ENCODE measurements at regions of chr11 and their contacts with region 1.

Region 1: DNA sequence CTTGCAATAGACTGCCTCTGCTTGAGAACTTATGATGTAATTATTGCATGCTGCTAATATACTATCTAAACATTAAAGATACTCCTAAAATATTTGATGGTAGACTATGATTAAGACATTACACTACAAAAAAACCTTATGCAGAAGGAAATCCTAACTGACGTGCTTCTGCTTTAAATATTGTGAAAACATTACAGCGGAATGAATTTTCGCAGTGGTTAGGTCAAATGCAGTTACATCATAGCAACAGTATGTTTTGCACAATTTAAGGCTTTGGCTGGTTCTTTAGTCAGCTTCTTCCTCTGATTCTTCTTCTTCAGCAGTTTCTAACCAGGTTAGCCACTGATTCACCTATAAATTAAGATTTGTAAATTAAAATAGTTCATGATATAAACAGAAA is 11.2 kb downstream of the EIF4G2 start:
- DNase-seq: no peak
- ATAC-seq: no peak
- H3K4me3 ChIP-seq: no peak overlapping the region
- H3K4me1 ChIP-seq: peaks cover 8% of the 10 kb centered on the region
- CTCF ChIP-seq: no peak

Region 2: DNA sequence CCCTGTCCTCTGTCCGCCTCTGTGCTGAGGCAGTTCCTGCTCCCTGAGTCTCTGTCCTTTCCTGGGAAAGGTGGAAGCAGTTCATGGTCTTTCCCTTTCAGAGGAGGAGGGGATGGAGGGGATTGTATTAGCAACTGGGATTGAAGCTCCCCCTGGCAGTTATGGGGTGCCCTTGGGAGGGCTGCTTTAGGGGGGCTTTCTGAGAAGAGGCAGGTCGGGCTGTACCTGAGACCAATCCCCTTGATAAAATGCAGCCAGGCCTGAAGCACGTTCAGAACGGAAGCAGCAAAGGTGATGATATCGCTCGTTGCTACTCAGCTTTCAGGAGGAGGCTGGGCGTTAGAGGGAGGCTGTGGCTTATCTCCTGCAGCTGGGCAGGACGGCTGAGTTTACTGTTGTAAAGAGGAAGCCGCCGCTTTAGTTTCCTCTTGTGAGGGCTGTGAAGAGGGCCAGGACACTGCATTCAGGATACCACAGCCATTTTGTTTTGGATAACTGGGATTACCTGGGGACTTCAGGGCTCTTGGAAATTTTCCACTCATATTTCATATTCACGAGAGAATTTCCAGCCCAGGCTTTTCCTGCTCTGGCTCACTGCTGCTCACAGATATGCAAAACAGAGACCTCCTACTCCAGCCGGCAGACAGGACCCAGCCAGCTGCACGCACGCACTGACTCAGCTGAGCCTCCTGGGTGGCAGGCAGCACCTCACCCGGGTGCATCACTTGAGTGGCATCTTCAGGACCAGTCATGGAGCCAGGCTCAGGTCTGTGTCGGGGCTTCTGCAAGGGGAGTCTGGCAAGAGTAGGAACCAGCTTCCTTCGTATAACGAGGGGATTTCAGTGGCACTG is 341.7 kb before region 1 on chr11:
- intact Hi-C with region 1: no loop called
- DNase-seq: peak; percentile 68 to 83 (median 81)
- ATAC-seq: peak; percentile 81
- H3K4me3 ChIP-seq: peak overlapping the region; percentile 3
- H3K4me1 ChIP-seq: peaks cover 10% of the 10 kb centered on the region
- CTCF ChIP-seq: no peak

Region 3: DNA sequence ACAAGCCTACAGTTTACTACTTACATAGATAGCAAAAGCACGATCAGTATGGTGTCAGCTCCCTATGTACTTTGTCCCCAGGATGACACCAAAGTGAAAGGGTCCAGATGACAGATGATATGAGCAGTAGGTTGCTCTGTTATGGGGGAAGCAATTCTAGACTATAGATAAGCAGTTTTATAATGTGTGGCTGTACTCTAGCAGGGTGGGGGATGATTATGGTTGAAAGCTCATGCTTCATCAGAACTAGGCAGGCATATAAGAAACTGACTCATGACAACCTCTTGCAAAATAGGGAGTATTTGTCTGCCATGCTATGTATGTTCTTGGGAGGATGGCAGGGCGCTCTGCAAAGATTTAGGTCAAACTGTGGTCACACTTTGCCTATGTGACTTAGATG is 218.5 kb after region 1 on chr11:
- intact Hi-C with region 1: loop called (anchors 5 kb)
- DNase-seq: no peak
- ATAC-seq: peak; percentile 43
- H3K4me3 ChIP-seq: no peak overlapping the region
- H3K4me1 ChIP-seq: no peaks in the 10 kb centered on the region
- CTCF ChIP-seq: no peak

Region 4: GRCh38 chr11:11022125-11022730 is 224.7 kb after region 1 on chr11:
- intact Hi-C with region 1: loop called (anchors 5 kb)
- DNase-seq: peak in 1 of 3 donors; percentile 67
- ATAC-seq: no peak
- H3K4me3 ChIP-seq: no peak overlapping the region
- H3K4me1 ChIP-seq: no peaks in the 10 kb centered on the region
- CTCF ChIP-seq: no peak

Region 5: GRCh38 chr11:11148104-11148509 is 350.6 kb after region 1 on chr11:
- intact Hi-C with region 1: no loop called
- DNase-seq: peak in 2 of 3 donors; percentile 32 to 43
- ATAC-seq: peak; percentile 75
- H3K4me3 ChIP-seq: no peak overlapping the region
- H3K4me1 ChIP-seq: no peaks in the 10 kb centered on the region
- CTCF ChIP-seq: no peak

Measured in mucosa of descending colon (tissue), 3 donors.